ENCODE measurements at regions of chr3 and their contacts with region 1.

Region 1: GRCh38 chr3:86990734-86991481 is at the start of gene VGLL3:
- DNase-seq: peak; percentile 50 to 83 (median 62)
- ATAC-seq: peak; percentile 48 to 92 (median 82)
- H3K4me3 ChIP-seq: peak within 1 kb of the TSS; percentile 15 to 84 (median 60)
- H3K27ac ChIP-seq: peak within 1 kb of the TSS; percentile 44 to 88 (median 68)
- H3K4me1 ChIP-seq: peaks cover 0 to 12% (median 2%) of the 10 kb centered on the region in 12 donors
- H3K27me3 ChIP-seq: peaks cover 0 to 24% (median 12%) of the 10 kb centered on the region in 9 donors
- CTCF ChIP-seq: peak in 3 of 12 donors; percentile 8 to 34 (median 15)
- POLR2A ChIP-seq: no peak
- total RNA-seq, gene VGLL3: 1.1 to 25.4 (median 6.3) TPM

Region 2: GRCh38 chr3:86793786-86794185 is 197.1 kb before region 1 on chr3:
- intact Hi-C with region 1: loop called in 1 of 10 experiments (anchors 10 kb)
- DNase-seq: no peak
- ATAC-seq: peak; percentile 47 to 93 (median 64)
- H3K4me3 ChIP-seq: peak overlapping the region in 1 of 12 donors; percentile 21
- H3K27ac ChIP-seq: peak overlapping the region in 11 of 12 donors; percentile 8 to 75 (median 54)
- H3K4me1 ChIP-seq: peaks cover 0 to 9% (median 0%) of the 10 kb centered on the region in 12 donors
- H3K27me3 ChIP-seq: no peaks in the 10 kb centered on the region
- CTCF ChIP-seq: no peak
- POLR2A ChIP-seq: no peak

Region 3: GRCh38 chr3:86914670-86915069 is 76.2 kb before region 1 on chr3:
- intact Hi-C with region 1: no loop called
- DNase-seq: no peak
- ATAC-seq: no peak
- H3K4me3 ChIP-seq: no peak overlapping the region
- H3K27ac ChIP-seq: no peak overlapping the region
- H3K4me1 ChIP-seq: no peaks in the 10 kb centered on the region
- H3K27me3 ChIP-seq: no peaks in the 10 kb centered on the region
- CTCF ChIP-seq: no peak
- POLR2A ChIP-seq: no peak

Region 4: GRCh38 chr3:87006844-87007439 is 16.0 kb after region 1 on chr3:
- intact Hi-C with region 1: no loop called
- DNase-seq: no peak
- ATAC-seq: no peak
- H3K4me3 ChIP-seq: no peak overlapping the region
- H3K27ac ChIP-seq: no peak overlapping the region
- H3K4me1 ChIP-seq: no peaks in the 10 kb centered on the region
- H3K27me3 ChIP-seq: no peaks in the 10 kb centered on the region
- CTCF ChIP-seq: peak in 6 of 12 donors; percentile 14 to 44 (median 30)
- POLR2A ChIP-seq: no peak